ENCODE measurements at regions of chr11 and their contacts with region 1.

Region 1: GRCh38 chr11:76759092-76759491 is 24.1 kb upstream of the TSKU start:
- DNase-seq: no peak
- H3K4me3 ChIP-seq: no peak overlapping the region
- H3K27ac ChIP-seq: no peak overlapping the region
- H3K4me1 ChIP-seq: peaks cover 0 to 8% (median 2%) of the 10 kb centered on the region in 4 experiments; a peak in 2 of 7 replicates
- H3K27me3 ChIP-seq: 0 out of 7 replicates have a peak, but pooled peaks cover 0 to 3% (median 0%) of the 10 kb centered on the region in 4 experiments
- CTCF ChIP-seq: no peak
- EP300 ChIP-seq: no peak
- POLR2A ChIP-seq: no peak
- RAD21 ChIP-seq: no peak

Region 2: DNA sequence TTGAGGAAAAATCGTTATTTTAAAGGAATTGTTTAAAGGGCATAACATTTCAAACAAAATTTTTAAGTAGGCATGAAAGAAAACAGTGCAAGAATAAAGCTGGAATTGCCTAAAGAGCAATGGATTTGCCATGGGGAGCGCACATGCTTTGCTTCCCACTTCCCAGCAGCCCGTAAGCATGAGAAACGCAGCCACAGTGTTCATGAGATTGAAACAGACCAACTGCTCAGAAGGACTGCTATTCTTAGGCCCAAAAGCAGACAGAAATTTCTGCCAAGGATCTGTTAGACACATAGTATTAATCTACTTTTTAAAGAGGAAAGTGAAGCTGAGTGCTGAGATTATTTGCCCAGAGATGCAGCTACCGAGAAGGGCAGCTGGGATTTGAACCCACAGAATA is 10.1 kb before region 1 on chr11:
- CTCF ChIA-PET with region 1: interaction called, 13 read pairs
- POLR2A ChIA-PET with region 1: interaction called, 3 read pairs
- DNase-seq: no peak
- H3K4me3 ChIP-seq: no peak overlapping the region
- H3K27ac ChIP-seq: no peak overlapping the region
- H3K4me1 ChIP-seq: peaks cover 0 to 14% (median 5%) of the 10 kb centered on the region in 4 experiments; a peak in 6 of 7 replicates
- H3K27me3 ChIP-seq: no peaks in the 10 kb centered on the region
- CTCF ChIP-seq: no peak
- EP300 ChIP-seq: no peak
- POLR2A ChIP-seq: no peak
- RAD21 ChIP-seq: no peak

Region 3: GRCh38 chr11:76978818-76979217 is 219.7 kb after region 1 on chr11:
- CTCF ChIA-PET with region 1: no interaction called
- POLR2A ChIA-PET with region 1: no interaction called
- DNase-seq: no peak
- H3K4me3 ChIP-seq: no peak overlapping the region
- H3K27ac ChIP-seq: no peak overlapping the region
- H3K4me1 ChIP-seq: no peaks in the 10 kb centered on the region
- H3K27me3 ChIP-seq: no peaks in the 10 kb centered on the region
- CTCF ChIP-seq: no peak
- EP300 ChIP-seq: no peak
- POLR2A ChIP-seq: no peak
- RAD21 ChIP-seq: no peak

Measured in H1 (cell line).